Activated CD4-positive, alpha-beta T cell treated with anti-CD3 and anti-CD28 coated beads, Interleukin-2, amount 10 ng/mL, durations not matched to agents 24 days and 14 days (primary cell): ENCODE measurements at regions of chr13 and their contacts with region 1.

Region 1: GRCh38 chr13:45623515-45624090 is 8.1 kb upstream of the ERICH6B start:
- DNase-seq: peak; percentile 63
- H3K4me3 Mint-ChIP-seq: no peak overlapping the region
- H3K27ac Mint-ChIP-seq: no peak overlapping the region
- H3K4me1 Mint-ChIP-seq: no peaks in the 10 kb centered on the region
- H3K27me3 Mint-ChIP-seq: peaks cover 41% of the 10 kb centered on the region

Region 2: DNA sequence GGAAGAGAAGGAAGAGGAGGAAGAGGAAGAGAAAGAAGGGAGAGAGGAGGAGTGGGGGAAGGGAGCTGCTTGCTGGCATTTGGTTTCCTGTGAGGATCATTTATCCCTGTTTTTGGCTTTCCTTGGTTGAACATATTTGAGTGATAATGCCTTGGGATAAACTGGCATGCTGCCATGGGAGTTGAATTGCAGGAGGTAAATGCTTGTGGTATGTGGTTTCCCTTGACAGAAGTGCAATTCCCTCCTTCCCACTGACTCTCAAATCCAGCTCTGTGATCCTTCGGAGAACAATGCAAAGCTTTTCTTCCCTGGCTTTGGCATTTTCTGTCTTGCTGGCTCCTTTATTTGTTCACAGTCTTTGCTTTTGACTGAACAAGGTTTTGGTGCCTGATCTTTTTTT is 51.3 kb after region 1 on chr13:
- intact Hi-C with region 1: no loop called
- DNase-seq: no peak
- H3K4me3 Mint-ChIP-seq: no peak overlapping the region
- H3K27ac Mint-ChIP-seq: no peak overlapping the region
- H3K4me1 Mint-ChIP-seq: peaks cover 4% of the 10 kb centered on the region
- H3K27me3 Mint-ChIP-seq: no peaks in the 10 kb centered on the region

Region 3: DNA sequence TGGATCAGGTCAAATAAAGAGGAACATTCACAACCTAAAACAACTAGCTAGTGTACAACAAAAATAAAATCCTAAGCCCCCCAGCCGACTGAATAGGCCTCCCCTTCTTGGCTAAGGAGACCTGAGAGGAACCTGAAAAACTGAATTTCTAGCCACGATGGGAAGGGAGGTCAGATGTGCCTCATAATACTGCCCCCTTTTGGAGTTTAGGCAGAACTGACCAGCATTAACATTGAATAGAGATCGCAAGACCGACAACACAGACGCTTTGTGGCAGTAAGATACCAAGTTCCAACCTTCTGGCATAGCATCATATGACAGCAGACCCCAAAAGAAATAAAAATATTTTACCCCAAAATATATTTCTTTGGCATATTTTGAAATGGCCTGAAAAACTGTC is 94.5 kb after region 1 on chr13:
- intact Hi-C with region 1: loop called (anchors 5 kb)
- DNase-seq: no peak
- H3K4me3 Mint-ChIP-seq: no peak overlapping the region
- H3K27ac Mint-ChIP-seq: no peak overlapping the region
- H3K4me1 Mint-ChIP-seq: no peaks in the 10 kb centered on the region
- H3K27me3 Mint-ChIP-seq: peaks cover 6% of the 10 kb centered on the region

Region 4: GRCh38 chr13:46119883-46120614 is 496.4 kb after region 1 on chr13:
- intact Hi-C with region 1: loop called (anchors 5 kb)
- DNase-seq: peak; percentile 53
- H3K4me3 Mint-ChIP-seq: no peak overlapping the region
- H3K27ac Mint-ChIP-seq: no peak overlapping the region
- H3K4me1 Mint-ChIP-seq: peaks cover 3% of the 10 kb centered on the region
- H3K27me3 Mint-ChIP-seq: peaks cover 27% of the 10 kb centered on the region

Region 5: GRCh38 chr13:47277774-47278173 is 1654.2 kb after region 1 on chr13:
- intact Hi-C with region 1: no loop called
- DNase-seq: no peak
- H3K4me3 Mint-ChIP-seq: no peak overlapping the region
- H3K27ac Mint-ChIP-seq: no peak overlapping the region
- H3K4me1 Mint-ChIP-seq: no peaks in the 10 kb centered on the region
- H3K27me3 Mint-ChIP-seq: no peaks in the 10 kb centered on the region